ENCODE measurements at regions of chr6 and their contacts with region 1.

Region 1: DNA sequence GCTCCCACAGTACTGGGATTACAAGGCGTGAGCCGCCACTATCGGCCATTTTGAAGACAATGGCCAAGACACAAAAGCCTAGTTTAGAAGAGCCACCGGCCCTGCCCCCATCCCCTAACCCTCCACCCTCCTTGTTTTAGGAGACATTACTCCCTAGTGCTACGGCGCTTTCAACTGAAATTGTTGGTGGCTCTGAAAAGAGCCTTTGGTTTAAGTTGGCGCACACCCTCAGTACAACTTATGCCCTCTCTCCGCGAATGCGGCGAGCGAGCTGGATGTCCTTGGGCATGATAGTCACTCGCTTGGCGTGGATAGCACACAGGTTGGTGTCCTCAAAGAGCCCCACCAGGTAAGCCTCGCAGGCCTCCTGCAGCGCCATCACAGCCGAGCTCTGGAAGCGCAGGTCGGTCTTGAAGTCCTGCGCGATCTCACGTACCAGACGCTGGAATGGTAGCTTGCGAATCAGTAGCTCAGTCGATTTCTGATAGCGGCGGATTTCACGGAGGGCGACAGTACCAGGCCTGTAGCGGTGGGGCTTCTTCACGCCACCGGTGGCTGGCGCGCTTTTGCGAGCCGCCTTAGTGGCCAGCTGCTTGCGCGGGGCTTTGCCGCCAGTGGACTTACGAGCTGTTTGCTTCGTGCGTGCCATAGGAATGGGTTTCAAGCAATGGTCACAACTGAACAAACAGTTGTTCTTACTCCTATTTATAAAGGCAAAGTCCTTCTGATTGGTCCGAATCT is 114.9 kb upstream of the BTN3A2 start:
- DNase-seq: no peak
- H3K27ac ChIP-seq: peak overlapping the region; percentile 98
- CTCF ChIP-seq: peak; percentile 56

Region 2: GRCh38 chr6:26031595-26032339 is 218.4 kb before region 1 on chr6:
- CTCF ChIA-PET with region 1: no interaction called
- POLR2A ChIA-PET with region 1: no interaction called
- DNase-seq: peak; percentile 96
- H3K27ac ChIP-seq: peak overlapping the region; percentile 99
- CTCF ChIP-seq: no peak

Region 3: GRCh38 chr6:26234421-26235296 is 15.5 kb before region 1 on chr6:
- CTCF ChIA-PET with region 1: interaction called, 3 read pairs
- POLR2A ChIA-PET with region 1: interaction called, 22 read pairs
- DNase-seq: peak; percentile 77
- H3K27ac ChIP-seq: peak overlapping the region; percentile 95
- CTCF ChIP-seq: no peak

Region 4: DNA sequence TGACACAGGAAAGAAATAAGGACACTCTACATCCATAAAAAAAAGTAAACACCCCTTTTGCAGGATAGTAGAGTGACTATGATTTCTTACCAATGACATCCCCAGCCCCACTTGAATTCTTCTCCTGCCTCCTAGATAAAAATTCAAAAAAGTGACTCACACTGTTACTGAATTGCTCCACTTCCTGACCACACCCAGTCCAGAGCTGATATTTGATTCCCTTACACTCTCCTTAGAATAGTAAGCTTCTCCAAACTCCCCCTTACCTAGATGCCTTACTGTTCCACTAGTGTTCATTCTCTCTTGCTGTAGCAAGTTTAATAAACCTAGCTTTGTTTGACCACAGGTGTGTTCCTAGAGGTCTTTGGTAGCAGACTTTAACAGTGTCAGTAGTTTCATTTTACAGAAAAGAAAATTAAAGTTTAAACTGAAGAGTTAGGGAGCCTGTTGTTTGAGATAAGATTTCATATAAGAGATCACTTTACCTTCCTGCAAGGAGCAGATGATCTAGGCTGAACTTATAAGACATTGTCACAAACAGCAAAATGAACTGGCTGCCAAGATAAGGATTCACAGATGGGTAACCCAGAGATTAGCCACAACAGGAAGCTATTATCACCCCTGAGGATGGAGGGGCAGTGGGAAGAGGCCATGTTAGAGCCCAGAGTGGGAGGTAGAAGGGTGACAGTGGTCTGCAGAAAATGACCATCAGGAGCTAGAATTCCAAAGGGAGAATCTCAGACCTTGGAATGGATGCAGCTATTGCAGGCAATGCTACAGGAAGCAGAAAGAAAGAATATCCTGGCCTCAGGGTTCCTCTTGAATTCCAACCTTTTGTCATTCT is 86.5 kb after region 1 on chr6:
- CTCF ChIA-PET with region 1: no interaction called
- POLR2A ChIA-PET with region 1: no interaction called
- DNase-seq: peak; percentile 83
- H3K27ac ChIP-seq: peak overlapping the region; percentile 23; the same call in 1 of the 2 replicates
- CTCF ChIP-seq: no peak

Measured in RWPE1 (cell line).